ENCODE measurements at regions of chr3 and their contacts with region 1.

Region 1: DNA sequence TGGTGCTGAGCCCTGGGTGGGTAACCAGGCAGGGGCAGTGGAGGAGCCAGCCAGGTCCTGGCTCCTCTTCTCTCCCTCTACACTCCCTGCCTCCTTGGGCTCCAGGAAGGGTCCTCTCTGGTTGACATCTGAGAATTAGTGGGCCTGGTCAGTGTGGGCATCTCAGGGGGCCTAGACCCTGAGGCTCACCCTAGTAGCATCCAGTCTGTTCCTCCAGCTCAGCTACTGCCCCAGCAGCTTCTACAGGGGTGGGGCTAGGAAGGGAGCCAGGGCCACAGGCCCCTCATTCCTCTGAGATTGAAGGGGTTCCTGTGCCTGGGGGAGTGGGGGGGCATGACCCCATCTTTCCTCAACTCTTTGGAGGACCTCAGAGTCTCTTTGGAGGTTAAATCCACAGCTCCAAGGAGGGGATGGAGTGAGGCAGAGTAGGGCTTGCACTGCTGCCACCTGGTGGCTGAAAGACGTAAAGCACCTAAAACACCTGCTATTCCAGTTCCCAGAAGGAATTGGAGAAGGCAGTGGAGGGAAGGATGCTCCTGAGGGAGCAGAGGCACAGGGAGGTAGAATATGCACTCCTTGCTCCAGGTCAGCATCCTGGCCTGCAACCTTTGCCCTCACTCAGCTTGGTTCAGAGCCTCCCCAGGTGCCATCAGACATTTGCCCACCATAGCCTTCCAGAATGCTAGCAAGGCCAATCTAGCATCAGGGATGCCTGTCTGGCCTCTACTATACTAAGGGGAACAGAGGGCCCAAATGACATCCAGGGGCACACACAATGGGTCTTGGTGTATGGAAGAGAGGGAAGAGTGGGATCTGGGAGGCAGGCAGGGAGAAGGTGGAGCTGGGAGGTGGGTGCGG is 25.1 kb downstream of the C3orf18 start:
- DNase-seq: no peak
- H3K4me3 ChIP-seq: no peak overlapping the region
- CTCF ChIP-seq: peak; percentile 84

Region 2: GRCh38 chr3:50235716-50236496 is 306.5 kb before region 1 on chr3 and contains the start of gene GNAI2:
- CTCF ChIA-PET with region 1: no interaction called
- POLR2A ChIA-PET with region 1: no interaction called
- DNase-seq: peak; percentile 82
- H3K4me3 ChIP-seq: peak within 1 kb of the TSS; percentile 83
- CTCF ChIP-seq: no peak

Region 3: GRCh38 chr3:50350527-50351322 is 191.7 kb before region 1 on chr3 and contains the starts of genes CYB561D2 and NPRL2:
- CTCF ChIA-PET with region 1: interaction called, 473 read pairs
- POLR2A ChIA-PET with region 1: interaction called, 3 read pairs
- DNase-seq: peak; percentile 55
- H3K4me3 ChIP-seq: peak within 1 kb of the TSS; percentile 99
- CTCF ChIP-seq: no peak

Region 4: GRCh38 chr3:50370594-50370993 is 171.8 kb before region 1 on chr3:
- CTCF ChIA-PET with region 1: interaction called, 18 read pairs
- POLR2A ChIA-PET with region 1: no interaction called
- DNase-seq: no peak
- H3K4me3 ChIP-seq: no peak overlapping the region
- CTCF ChIP-seq: peak; percentile 15

Region 5: GRCh38 chr3:50436114-50436674 is 106.2 kb before region 1 on chr3:
- CTCF ChIA-PET with region 1: interaction called, 54 read pairs
- POLR2A ChIA-PET with region 1: no interaction called
- DNase-seq: no peak
- H3K4me3 ChIP-seq: no peak overlapping the region
- CTCF ChIP-seq: peak; percentile 74

Region 6: DNA sequence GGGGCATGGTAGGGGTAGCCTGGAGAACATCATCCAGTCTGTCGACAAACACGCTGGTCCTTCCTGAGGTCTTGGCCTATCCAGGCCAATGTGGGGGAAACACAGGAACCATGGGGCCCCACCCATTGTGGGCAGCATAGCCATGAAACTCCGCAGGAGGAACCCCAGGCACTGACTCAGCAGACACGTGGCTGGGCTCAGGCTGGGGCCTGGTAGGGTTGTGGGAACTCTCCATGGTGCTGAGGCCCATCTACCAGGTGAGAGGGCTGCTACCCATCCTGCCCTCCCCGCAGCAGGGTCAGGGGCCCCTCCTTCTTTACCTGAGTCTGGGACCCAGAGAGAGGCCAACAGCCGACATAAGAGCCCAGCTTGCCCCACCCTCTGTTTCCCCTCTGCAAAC is 16.4 kb before region 1 on chr3:
- CTCF ChIA-PET with region 1: interaction called, 62 read pairs
- POLR2A ChIA-PET with region 1: no interaction called
- DNase-seq: no peak
- H3K4me3 ChIP-seq: no peak overlapping the region
- CTCF ChIP-seq: no peak

Region 7: GRCh38 chr3:50674349-50675178 is 132.2 kb after region 1 on chr3 and contains the start of gene DOCK3:
- CTCF ChIA-PET with region 1: no interaction called
- POLR2A ChIA-PET with region 1: no interaction called
- DNase-seq: no peak
- H3K4me3 ChIP-seq: peak within 1 kb of the TSS; percentile 43
- CTCF ChIP-seq: no peak

Measured in AG04449 (cell line).